ENCODE measurements at regions of chr2 and their contacts with region 1.

Region 1: GRCh38 chr2:118207889-118208288 is 119.6 kb downstream of the INSIG2 start:
- DNase-seq: no peak
- ATAC-seq: no peak
- H3K4me3 ChIP-seq: no peak overlapping the region
- H3K4me3 Mint-ChIP-seq: no peak overlapping the region
- H3K27ac ChIP-seq: no peak overlapping the region
- H3K27ac Mint-ChIP-seq: no peak overlapping the region
- H3K4me1 ChIP-seq: no peaks in the 10 kb centered on the region
- H3K4me1 Mint-ChIP-seq: peaks cover 0 to 3% (median 3%) of the 10 kb centered on the region in 3 donors
- H3K27me3 ChIP-seq: peaks cover 6 to 22% of the 10 kb centered on the region in 2 experiments
- H3K27me3 Mint-ChIP-seq: peaks cover 35 to 60% of the 10 kb centered on the region in 2 donors

Region 2: GRCh38 chr2:118177884-118178283 is 30.0 kb before region 1 on chr2:
- CTCF ChIA-PET with region 1: no interaction called
- POLR2A ChIA-PET with region 1: no interaction called
- DNase-seq: no peak
- ATAC-seq: no peak
- H3K4me3 ChIP-seq: no peak overlapping the region
- H3K4me3 Mint-ChIP-seq: no peak overlapping the region
- H3K27ac ChIP-seq: no peak overlapping the region
- H3K27ac Mint-ChIP-seq: no peak overlapping the region
- H3K4me1 ChIP-seq: no peaks in the 10 kb centered on the region
- H3K4me1 Mint-ChIP-seq: peaks cover 0 to 9% (median 5%) of the 10 kb centered on the region in 3 donors
- H3K27me3 ChIP-seq: peaks cover 0 to 13% of the 10 kb centered on the region in 2 experiments
- H3K27me3 Mint-ChIP-seq: peaks cover 3 to 9% of the 10 kb centered on the region in 2 donors

Region 3: DNA sequence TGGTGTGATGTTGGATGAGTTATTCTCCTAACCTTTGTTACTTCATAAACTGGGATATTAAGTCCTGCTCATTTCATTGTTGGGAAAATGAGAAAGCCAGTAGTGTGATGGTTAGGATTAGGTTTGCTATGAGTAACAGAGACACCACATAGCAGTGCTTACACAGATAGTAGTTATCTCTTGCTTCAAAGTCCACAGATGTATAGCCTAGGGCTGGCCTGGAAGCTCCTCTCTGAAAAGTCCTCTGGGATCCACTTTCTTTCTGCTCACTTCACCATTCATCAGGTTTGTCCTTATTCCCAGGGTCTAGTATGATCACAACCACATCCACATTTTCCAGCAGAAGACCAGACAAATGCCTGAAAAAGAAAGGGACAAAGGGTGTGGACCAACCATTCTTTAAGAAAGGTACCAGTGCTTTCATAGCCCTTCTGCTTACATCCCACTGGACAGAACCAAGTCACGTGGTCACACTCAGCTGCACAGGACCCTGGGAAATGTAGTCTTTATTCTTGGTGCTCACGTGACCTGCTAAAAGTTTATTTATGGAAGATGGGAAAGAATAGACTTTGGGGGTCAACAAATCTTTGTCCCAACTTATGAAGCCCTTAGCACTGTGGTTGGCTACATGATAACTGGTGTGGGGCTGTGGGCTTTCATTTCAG is 10.7 kb before region 1 on chr2:
- CTCF ChIA-PET with region 1: interaction called in 1 of 2 experiments, 4 read pairs
- POLR2A ChIA-PET with region 1: interaction called, 7 to 12 read pairs
- DNase-seq: peak in 1 of 35 experiments; percentile 11
- ATAC-seq: peak in 1 of 4 experiments; percentile 44
- H3K4me3 ChIP-seq: no peak overlapping the region
- H3K4me3 Mint-ChIP-seq: no peak overlapping the region
- H3K27ac ChIP-seq: no peak overlapping the region
- H3K27ac Mint-ChIP-seq: no peak overlapping the region
- H3K4me1 ChIP-seq: no peaks in the 10 kb centered on the region
- H3K4me1 Mint-ChIP-seq: no peaks in the 10 kb centered on the region
- H3K27me3 ChIP-seq: peaks cover 0 to 12% of the 10 kb centered on the region in 2 experiments
- H3K27me3 Mint-ChIP-seq: peaks cover 6 to 10% of the 10 kb centered on the region in 2 donors

Region 4: GRCh38 chr2:118221666-118222594 is 14.0 kb after region 1 on chr2:
- CTCF ChIA-PET with region 1: interaction called, 4 to 13 read pairs
- POLR2A ChIA-PET with region 1: no interaction called
- DNase-seq: peak in 15 of 35 experiments; percentile 6 to 76 (median 19)
- ATAC-seq: peak; percentile 58 to 67 (median 65)
- H3K4me3 ChIP-seq: no peak overlapping the region
- H3K4me3 Mint-ChIP-seq: peak overlapping the region in 1 of 3 donors; percentile 87
- H3K27ac ChIP-seq: no peak overlapping the region
- H3K27ac Mint-ChIP-seq: no peak overlapping the region
- H3K4me1 ChIP-seq: peaks cover 9 to 17% of the 10 kb centered on the region in 2 experiments
- H3K4me1 Mint-ChIP-seq: peaks cover 21 to 29% (median 28%) of the 10 kb centered on the region in 3 donors
- H3K27me3 ChIP-seq: peaks cover 17 to 33% of the 10 kb centered on the region in 2 experiments
- H3K27me3 Mint-ChIP-seq: peaks cover 46 to 69% of the 10 kb centered on the region in 2 donors

Measured in T-cell (primary cell).